H1 (cell line): ENCODE measurements at regions of chr16 and their contacts with region 1.

Region 1: GRCh38 chr16:23182460-23183309 is at the start of gene SCNN1G:
- DNase-seq: peak; percentile 84 to 98
- H3K4me3 ChIP-seq: peak within 1 kb of the TSS; percentile 35 to 68 (median 55)
- H3K27ac ChIP-seq: no peak within 1 kb of the TSS
- H3K4me1 ChIP-seq: peaks cover 0 to 8% (median 4%) of the 10 kb centered on the region in 4 experiments; a peak in 4 of 7 replicates
- H3K27me3 ChIP-seq: peaks cover 7 to 23% (median 16%) of the 10 kb centered on the region in 4 experiments
- CTCF ChIP-seq: peak; percentile 96 to 99 (median 97)
- EP300 ChIP-seq: 0 out of 3 replicates have a peak, but pooled peaks of 1 of the 2 experiments have one; percentile 64
- POLR2A ChIP-seq: no peak
- RAD21 ChIP-seq: peak; percentile 91 to 98
- total RNA-seq, gene SCNN1G: 0.99 and 1.1 TPM in 2 replicates

Region 2: GRCh38 chr16:23114131-23114904 is 68.4 kb before region 1 on chr16:
- CTCF ChIA-PET with region 1: no interaction called
- POLR2A ChIA-PET with region 1: no interaction called
- DNase-seq: no peak
- H3K4me3 ChIP-seq: no peak overlapping the region
- H3K27ac ChIP-seq: no peak overlapping the region
- H3K4me1 ChIP-seq: peaks cover 0 to 12% (median 3%) of the 10 kb centered on the region in 4 experiments; a peak in 2 of 7 replicates
- H3K27me3 ChIP-seq: no peaks in the 10 kb centered on the region
- CTCF ChIP-seq: no peak
- EP300 ChIP-seq: no peak
- POLR2A ChIP-seq: no peak
- RAD21 ChIP-seq: no peak

Region 3: GRCh38 chr16:23131931-23132621 is 50.6 kb before region 1 on chr16:
- CTCF ChIA-PET with region 1: no interaction called
- POLR2A ChIA-PET with region 1: no interaction called
- DNase-seq: no peak
- H3K4me3 ChIP-seq: no peak overlapping the region
- H3K27ac ChIP-seq: no peak overlapping the region
- H3K4me1 ChIP-seq: peaks cover 0 to 11% (median 4%) of the 10 kb centered on the region in 4 experiments; a peak in 5 of 7 replicates
- H3K27me3 ChIP-seq: no peaks in the 10 kb centered on the region
- CTCF ChIP-seq: no peak
- EP300 ChIP-seq: no peak
- POLR2A ChIP-seq: no peak
- RAD21 ChIP-seq: no peak

Region 4: GRCh38 chr16:23202166-23202565 is 19.5 kb after region 1 on chr16:
- CTCF ChIA-PET with region 1: interaction called, 10 read pairs
- POLR2A ChIA-PET with region 1: interaction called, 4 read pairs
- DNase-seq: no peak
- H3K4me3 ChIP-seq: no peak overlapping the region
- H3K27ac ChIP-seq: no peak overlapping the region
- H3K4me1 ChIP-seq: peaks cover 8 to 29% (median 27%) of the 10 kb centered on the region in 4 experiments
- H3K27me3 ChIP-seq: no peaks in the 10 kb centered on the region
- CTCF ChIP-seq: no peak
- EP300 ChIP-seq: no peak
- POLR2A ChIP-seq: no peak
- RAD21 ChIP-seq: no peak

Region 5: DNA sequence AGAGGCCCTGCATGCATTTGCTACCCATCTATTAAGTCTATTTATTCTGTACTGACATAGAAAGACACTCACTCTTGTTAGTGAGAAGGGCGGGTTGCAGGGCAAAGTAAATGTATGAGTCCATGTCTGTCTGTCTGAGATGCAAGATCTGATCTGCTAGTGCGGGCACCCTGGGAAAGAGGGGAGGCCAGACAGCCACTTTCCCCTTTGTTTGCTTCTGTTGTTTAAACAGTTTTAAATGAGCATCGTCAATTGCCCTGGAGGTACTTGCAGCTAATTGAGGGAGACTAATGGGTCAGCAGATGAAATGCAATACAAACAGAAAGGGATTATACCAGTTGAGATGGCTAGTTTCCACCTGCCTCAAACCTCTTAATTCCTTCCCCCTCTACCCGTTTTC is 24.8 kb after region 1 on chr16:
- CTCF ChIA-PET with region 1: interaction called, 16 read pairs
- POLR2A ChIA-PET with region 1: interaction called, 4 read pairs
- DNase-seq: no peak
- H3K4me3 ChIP-seq: no peak overlapping the region
- H3K27ac ChIP-seq: no peak overlapping the region
- H3K4me1 ChIP-seq: peaks cover 3 to 22% (median 10%) of the 10 kb centered on the region in 4 experiments
- H3K27me3 ChIP-seq: no peaks in the 10 kb centered on the region
- CTCF ChIP-seq: no peak
- EP300 ChIP-seq: no peak
- POLR2A ChIP-seq: no peak
- RAD21 ChIP-seq: no peak

Region 6: GRCh38 chr16:23245268-23245667 is 62.6 kb after region 1 on chr16:
- CTCF ChIA-PET with region 1: interaction called, 10 read pairs
- POLR2A ChIA-PET with region 1: no interaction called
- DNase-seq: no peak
- H3K4me3 ChIP-seq: no peak overlapping the region
- H3K27ac ChIP-seq: no peak overlapping the region
- H3K4me1 ChIP-seq: no peaks in the 10 kb centered on the region
- H3K27me3 ChIP-seq: no peaks in the 10 kb centered on the region
- CTCF ChIP-seq: no peak
- EP300 ChIP-seq: no peak
- POLR2A ChIP-seq: no peak
- RAD21 ChIP-seq: no peak